ENCODE measurements at regions of chr12 and their contacts with region 1.

Region 1: DNA sequence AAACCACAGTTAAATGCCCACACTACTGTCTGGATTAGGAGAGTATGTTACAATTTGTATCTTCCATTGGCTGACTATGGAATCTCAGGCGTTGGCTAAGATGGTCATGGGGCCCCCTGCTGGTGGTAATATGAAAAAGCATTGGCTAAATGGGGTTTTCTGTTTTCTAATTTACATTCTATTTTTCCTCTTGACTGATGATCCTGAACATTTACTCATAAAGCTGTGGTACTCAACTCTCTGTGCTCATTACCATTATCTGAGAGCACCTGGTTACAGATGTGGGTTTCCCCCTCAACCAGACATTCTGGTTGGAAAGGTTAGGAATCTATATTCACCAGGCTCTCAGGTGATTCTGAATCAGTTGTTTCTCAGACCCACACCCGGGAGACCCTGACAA is 64.8 kb downstream of the WSCD2 start:
- DNase-seq: peak; percentile 49
- H3K4me3 Mint-ChIP-seq: no peak overlapping the region
- H3K27ac Mint-ChIP-seq: no peak overlapping the region
- H3K4me1 Mint-ChIP-seq: peaks cover 5% of the 10 kb centered on the region
- H3K27me3 Mint-ChIP-seq: peaks cover 40% of the 10 kb centered on the region
- CTCF ChIP-seq: peak; percentile 63

Region 2: GRCh38 chr12:107917912-107918800 is 275.8 kb before region 1 on chr12:
- CTCF ChIA-PET with region 1: interaction called, 3 read pairs
- intact Hi-C with region 1: loop called (anchors 5 kb)
- DNase-seq: peak; percentile 36
- H3K4me3 Mint-ChIP-seq: no peak overlapping the region
- H3K27ac Mint-ChIP-seq: no peak overlapping the region
- H3K4me1 Mint-ChIP-seq: no peaks in the 10 kb centered on the region
- H3K27me3 Mint-ChIP-seq: peaks cover 88% of the 10 kb centered on the region
- CTCF ChIP-seq: peak; percentile 54

Region 3: GRCh38 chr12:107992870-107993451 is 201.0 kb before region 1 on chr12:
- CTCF ChIA-PET with region 1: no interaction called
- intact Hi-C with region 1: loop called (anchors 2 kb)
- DNase-seq: peak; percentile 53
- H3K4me3 Mint-ChIP-seq: no peak overlapping the region
- H3K27ac Mint-ChIP-seq: no peak overlapping the region
- H3K4me1 Mint-ChIP-seq: no peaks in the 10 kb centered on the region
- H3K27me3 Mint-ChIP-seq: peaks cover 45% of the 10 kb centered on the region
- CTCF ChIP-seq: peak; percentile 56

Region 4: GRCh38 chr12:108232528-108232927 is 38.6 kb after region 1 on chr12:
- CTCF ChIA-PET with region 1: no interaction called
- intact Hi-C with region 1: no loop called
- DNase-seq: peak; percentile 19
- H3K4me3 Mint-ChIP-seq: no peak overlapping the region
- H3K27ac Mint-ChIP-seq: no peak overlapping the region
- H3K4me1 Mint-ChIP-seq: no peaks in the 10 kb centered on the region
- H3K27me3 Mint-ChIP-seq: peaks cover 67% of the 10 kb centered on the region
- CTCF ChIP-seq: no peak